ENCODE measurements at regions of chr6 and their contacts with region 1.

Region 1: GRCh38 chr6:25889877-25890853 is 16.1 kb upstream of the SLC17A3 start:
- DNase-seq: peak; percentile 27
- ATAC-seq: peak; percentile 91
- H3K4me3 ChIP-seq: no peak overlapping the region
- H3K27ac ChIP-seq: no peak overlapping the region
- H3K4me1 ChIP-seq: no peaks in the 10 kb centered on the region
- H3K27me3 ChIP-seq: no peaks in the 10 kb centered on the region
- CTCF ChIP-seq: peak; percentile 31 to 67 (median 59); a peak in 5 of 6 replicates
- POLR2A ChIP-seq: no peak
- RAD21 ChIP-seq: peak; percentile 86

Region 2: DNA sequence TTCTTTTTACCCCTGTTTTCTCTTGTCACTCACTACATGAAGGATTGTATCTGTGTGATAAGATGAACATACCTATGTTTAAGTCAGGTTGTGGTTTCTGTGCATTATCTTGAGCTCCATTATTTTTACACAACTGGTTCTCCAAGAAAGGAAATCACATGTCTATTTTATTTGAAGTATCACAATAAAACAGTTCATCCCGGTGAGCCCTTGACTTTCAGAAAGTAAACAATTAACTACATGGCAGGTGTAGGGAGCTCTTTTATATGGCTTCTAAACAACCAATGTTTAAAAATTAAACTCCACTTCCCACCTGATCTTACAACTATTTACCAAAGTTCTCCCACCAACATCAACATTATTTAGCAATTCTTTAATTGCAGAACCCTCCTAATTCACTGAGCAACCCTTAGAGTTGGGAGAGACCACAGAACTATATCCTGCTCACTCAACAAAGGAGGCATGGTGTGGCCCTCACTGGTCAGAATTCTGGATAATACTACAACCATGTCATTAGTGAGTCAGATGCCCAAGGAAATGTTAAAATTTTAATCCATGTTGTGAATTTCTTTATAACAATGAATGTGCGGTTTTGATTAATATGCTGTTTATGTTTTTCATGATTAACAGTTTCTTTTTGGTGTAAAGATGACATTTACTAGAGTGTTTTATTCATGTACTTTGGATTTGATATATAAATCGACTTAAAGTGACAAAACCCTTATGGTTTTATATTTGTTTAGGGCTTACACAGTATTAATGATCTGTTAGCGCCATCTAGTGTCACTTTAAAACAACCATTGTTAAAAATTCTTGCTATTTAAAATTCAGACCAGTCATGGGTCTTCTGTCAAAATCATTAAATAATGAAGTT is 288.1 kb before region 1 on chr6:
- CTCF ChIA-PET with region 1: no interaction called
- POLR2A ChIA-PET with region 1: no interaction called
- RAD21 ChIA-PET with region 1: no interaction called
- intact Hi-C with region 1: loop called (anchors 5 kb)
- DNase-seq: peak; percentile 28
- ATAC-seq: no peak; the same call in 1 of the 2 replicates
- H3K4me3 ChIP-seq: no peak overlapping the region
- H3K27ac ChIP-seq: no peak overlapping the region
- H3K4me1 ChIP-seq: no peaks in the 10 kb centered on the region
- H3K27me3 ChIP-seq: no peaks in the 10 kb centered on the region
- CTCF ChIP-seq: peak; percentile 28 to 75 (median 67); a peak in 4 of 6 replicates
- POLR2A ChIP-seq: no peak
- RAD21 ChIP-seq: peak; percentile 74

Region 3: GRCh38 chr6:26205625-26206574 is 315.7 kb after region 1 on chr6:
- CTCF ChIA-PET with region 1: no interaction called
- POLR2A ChIA-PET with region 1: no interaction called
- RAD21 ChIA-PET with region 1: no interaction called
- intact Hi-C with region 1: no loop called
- DNase-seq: peak; percentile 74
- ATAC-seq: peak; percentile 45
- H3K4me3 ChIP-seq: peak overlapping the region; percentile 63 to 71
- H3K27ac ChIP-seq: peak overlapping the region; percentile 98
- H3K4me1 ChIP-seq: peaks cover 19 to 31% of the 10 kb centered on the region in 2 experiments
- H3K27me3 ChIP-seq: no peaks in the 10 kb centered on the region
- CTCF ChIP-seq: no peak
- POLR2A ChIP-seq: no peak
- RAD21 ChIP-seq: peak; percentile 13; the same call in 1 of the 2 replicates

Region 4: DNA sequence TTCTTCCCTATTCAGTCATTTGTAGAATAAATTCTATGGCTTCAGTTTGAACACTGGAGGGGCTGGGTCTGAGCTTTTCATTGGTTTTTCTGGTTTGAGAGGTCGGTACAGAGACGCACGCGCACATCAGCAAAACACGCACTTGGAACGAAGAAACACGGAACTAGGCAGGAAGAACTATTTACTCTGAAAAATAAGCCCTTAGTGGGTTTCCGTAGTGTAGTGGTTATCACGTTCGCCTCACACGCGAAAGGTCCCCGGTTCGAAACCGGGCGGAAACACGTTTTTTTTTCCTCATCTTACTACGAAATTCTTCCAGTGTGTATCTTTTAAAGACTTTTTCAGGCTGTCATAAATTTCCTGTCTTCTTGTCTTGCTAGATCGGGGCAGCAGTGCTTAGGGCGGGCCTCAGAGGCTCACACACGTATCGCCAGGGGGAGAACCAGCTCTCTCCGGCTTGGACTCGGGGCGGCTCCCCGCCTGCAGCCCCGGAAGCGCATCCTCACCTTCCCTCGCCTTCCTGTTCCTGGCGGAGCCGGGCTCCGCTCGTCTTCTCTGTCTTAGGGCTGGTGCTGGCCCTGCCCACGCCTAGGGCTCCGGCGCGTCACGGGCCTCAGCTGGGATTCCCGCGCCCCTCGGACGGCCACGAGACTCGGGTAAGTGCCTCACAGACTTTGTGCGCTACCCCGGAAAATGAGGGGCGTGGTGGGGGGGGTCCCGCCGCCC is 647.8 kb after region 1 on chr6 and contains the start of gene HMGN4:
- CTCF ChIA-PET with region 1: no interaction called
- POLR2A ChIA-PET with region 1: no interaction called
- RAD21 ChIA-PET with region 1: no interaction called
- intact Hi-C with region 1: no loop called
- DNase-seq: peak; percentile 81
- ATAC-seq: peak; percentile 73
- H3K4me3 ChIP-seq: peak within 1 kb of the TSS; percentile 74 to 89
- H3K27ac ChIP-seq: peak within 1 kb of the TSS; percentile 72
- H3K4me1 ChIP-seq: peaks cover 14 to 51% of the 10 kb centered on the region in 2 experiments
- H3K27me3 ChIP-seq: no peaks in the 10 kb centered on the region
- CTCF ChIP-seq: no peak
- POLR2A ChIP-seq: no peak
- RAD21 ChIP-seq: 0 out of 2 replicates have a peak, but pooled peaks have one; percentile 17
- total RNA-seq, gene HMGN4: 73.8 TPM

Measured in HCT116 (cell line).